CD8-positive, alpha-beta memory T cell (primary cell): ENCODE measurements at regions of chr1 and their contacts with region 1.

Region 1: DNA sequence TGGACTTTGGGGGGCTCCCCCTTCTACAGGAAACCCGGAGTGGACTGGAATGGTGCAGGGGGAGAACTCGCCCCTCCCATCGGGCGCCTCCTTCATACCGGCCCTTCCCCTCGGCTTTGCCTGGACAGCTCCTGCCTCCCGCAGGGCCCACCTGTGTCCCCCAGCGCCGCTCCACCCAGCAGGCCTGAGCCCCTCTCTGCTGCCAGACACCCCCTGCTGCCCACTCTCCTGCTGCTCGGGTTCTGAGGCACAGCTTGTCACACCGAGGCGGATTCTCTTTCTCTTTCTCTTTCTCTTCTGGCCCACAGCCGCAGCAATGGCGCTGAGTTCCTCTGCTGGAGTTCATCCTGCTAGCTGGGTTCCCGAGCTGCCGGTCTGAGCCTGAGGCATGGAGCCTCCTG is at the start of gene TNFRSF14:
- DNase-seq: peak; percentile 65 to 87 (median 79)
- H3K4me3 ChIP-seq: peak within 1 kb of the TSS; percentile 98
- H3K4me3 Mint-ChIP-seq: peak within 1 kb of the TSS; percentile 94 to 99 (median 99)
- H3K27ac ChIP-seq: peak within 1 kb of the TSS; percentile 95
- H3K27ac Mint-ChIP-seq: peak within 1 kb of the TSS; percentile 93 to 99 (median 98)
- H3K4me1 ChIP-seq: peaks cover 35% of the 10 kb centered on the region
- H3K4me1 Mint-ChIP-seq: peaks cover 28 to 58% (median 30%) of the 10 kb centered on the region in 3 donors
- H3K27me3 ChIP-seq: no peaks in the 10 kb centered on the region
- H3K27me3 Mint-ChIP-seq: peaks cover 0 to under 1% of the 10 kb centered on the region in 2 donors
- total RNA-seq, gene TNFRSF14: 164 to 168 TPM

Region 2: DNA sequence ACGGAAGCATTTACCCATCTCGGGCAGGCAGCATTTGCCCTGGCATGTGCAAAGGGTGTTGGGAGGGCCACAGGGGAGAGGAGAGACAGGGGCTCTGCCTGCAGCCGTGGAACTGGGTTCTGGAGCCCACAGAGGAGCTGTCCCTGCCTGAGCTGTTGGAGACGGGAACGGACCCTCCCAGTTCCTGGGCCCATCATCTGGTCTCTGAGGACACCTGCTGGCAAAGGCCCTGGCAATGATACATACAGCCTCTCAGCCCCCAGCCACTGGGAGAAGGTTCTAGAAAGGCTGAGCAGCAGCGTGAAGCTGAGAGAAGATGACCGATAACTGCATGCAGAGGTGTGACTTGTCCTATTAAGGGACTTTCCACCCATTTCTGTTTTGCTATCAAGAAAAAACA is 393.1 kb before region 1 on chr1:
- CTCF ChIA-PET with region 1: no interaction called
- POLR2A ChIA-PET with region 1: no interaction called
- DNase-seq: peak in 1 of 5 donors; percentile 33
- H3K4me3 ChIP-seq: no peak overlapping the region
- H3K4me3 Mint-ChIP-seq: peak overlapping the region in 1 of 7 donors; percentile 44
- H3K27ac ChIP-seq: no peak overlapping the region
- H3K27ac Mint-ChIP-seq: peak overlapping the region in 2 of 8 donors; percentile 24 to 73
- H3K4me1 ChIP-seq: no peaks in the 10 kb centered on the region
- H3K4me1 Mint-ChIP-seq: peaks cover 10 to 15% (median 13%) of the 10 kb centered on the region in 3 donors
- H3K27me3 ChIP-seq: no peaks in the 10 kb centered on the region
- H3K27me3 Mint-ChIP-seq: no peaks in the 10 kb centered on the region

Region 3: DNA sequence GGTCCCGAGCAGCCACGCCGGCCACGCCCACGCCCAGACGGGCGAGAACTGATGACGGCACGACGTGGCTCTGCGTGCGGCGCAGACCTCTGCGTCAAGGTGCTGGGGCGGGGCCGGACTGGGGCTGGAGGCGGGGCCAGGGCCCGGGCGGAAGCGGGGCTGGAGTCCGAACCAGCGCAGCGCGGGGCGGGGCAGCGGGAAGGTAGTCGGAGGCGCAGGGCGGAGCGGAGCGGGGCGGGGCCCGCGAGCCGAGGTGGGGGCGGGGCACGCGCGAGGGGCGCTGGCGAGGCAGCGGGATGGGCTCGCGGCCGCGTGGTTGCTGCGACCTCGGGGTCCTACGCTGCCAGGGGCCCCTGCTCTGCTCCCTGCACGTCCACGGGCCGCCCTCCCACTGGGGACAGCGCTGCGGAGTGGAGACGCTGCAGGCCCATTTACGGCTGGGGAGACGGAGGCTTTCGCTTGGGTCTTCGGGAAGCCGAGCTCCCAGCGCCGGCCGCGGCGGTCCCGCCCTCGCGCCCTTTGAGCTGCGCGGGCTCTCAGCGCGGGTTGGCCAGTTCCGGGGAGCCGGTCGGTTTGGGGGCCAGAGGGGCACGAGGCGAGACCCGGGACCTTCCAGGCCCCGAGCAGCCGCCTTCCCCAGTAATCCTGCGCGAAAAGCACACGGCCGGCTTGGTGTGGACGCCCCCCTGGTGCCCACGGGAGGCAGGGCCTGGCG is 143.6 kb before region 1 on chr1 and contains the start of gene PEX10:
- CTCF ChIA-PET with region 1: interaction called, 20 read pairs
- POLR2A ChIA-PET with region 1: interaction called, 5 read pairs
- DNase-seq: peak; percentile 98 to 99 (median 98)
- H3K4me3 ChIP-seq: peak within 1 kb of the TSS; percentile 78
- H3K4me3 Mint-ChIP-seq: peak within 1 kb of the TSS; percentile 79 to 94 (median 87)
- H3K27ac ChIP-seq: peak within 1 kb of the TSS; percentile 90
- H3K27ac Mint-ChIP-seq: peak within 1 kb of the TSS; percentile 81 to 97 (median 88)
- H3K4me1 ChIP-seq: peaks cover 52% of the 10 kb centered on the region
- H3K4me1 Mint-ChIP-seq: peaks cover 30 to 51% (median 30%) of the 10 kb centered on the region in 3 donors
- H3K27me3 ChIP-seq: no peaks in the 10 kb centered on the region
- H3K27me3 Mint-ChIP-seq: no peaks in the 10 kb centered on the region
- total RNA-seq, gene PEX10: 25.6 to 26.2 TPM

Region 4: GRCh38 chr1:2525920-2526823 is 30.1 kb before region 1 on chr1 and contains the start of gene PANK4:
- CTCF ChIA-PET with region 1: interaction called, 9 read pairs
- POLR2A ChIA-PET with region 1: interaction called, 15 read pairs
- DNase-seq: peak; percentile 79 to 90 (median 85)
- H3K4me3 ChIP-seq: peak within 1 kb of the TSS; percentile 93
- H3K4me3 Mint-ChIP-seq: peak within 1 kb of the TSS; percentile 88 to 99 (median 90)
- H3K27ac ChIP-seq: peak within 1 kb of the TSS; percentile 62
- H3K27ac Mint-ChIP-seq: peak within 1 kb of the TSS; percentile 86 to 98 (median 97)
- H3K4me1 ChIP-seq: peaks cover 57% of the 10 kb centered on the region
- H3K4me1 Mint-ChIP-seq: peaks cover 40 to 69% (median 44%) of the 10 kb centered on the region in 3 donors
- H3K27me3 ChIP-seq: peaks cover 7% of the 10 kb centered on the region
- H3K27me3 Mint-ChIP-seq: peaks cover 9 to 11% of the 10 kb centered on the region in 2 donors
- total RNA-seq, gene PANK4: 40.3 to 46.3 TPM

Region 5: GRCh38 chr1:2545759-2546514 is 10.3 kb before region 1 on chr1:
- CTCF ChIA-PET with region 1: interaction called, 19 read pairs
- POLR2A ChIA-PET with region 1: interaction called, 12 read pairs
- DNase-seq: peak; percentile 86 to 92 (median 88)
- H3K4me3 ChIP-seq: peak overlapping the region; percentile 96
- H3K4me3 Mint-ChIP-seq: peak overlapping the region; percentile 91 to 98 (median 94)
- H3K27ac ChIP-seq: peak overlapping the region; percentile 92
- H3K27ac Mint-ChIP-seq: peak overlapping the region; percentile 50 to 100 (median 96)
- H3K4me1 ChIP-seq: peaks cover 52% of the 10 kb centered on the region
- H3K4me1 Mint-ChIP-seq: peaks cover 13 to 53% (median 19%) of the 10 kb centered on the region in 3 donors
- H3K27me3 ChIP-seq: no peaks in the 10 kb centered on the region
- H3K27me3 Mint-ChIP-seq: no peaks in the 10 kb centered on the region

Region 6: GRCh38 chr1:2575801-2576663 is 19.8 kb after region 1 on chr1:
- CTCF ChIA-PET with region 1: interaction called, 30 read pairs
- POLR2A ChIA-PET with region 1: interaction called, 12 read pairs
- DNase-seq: peak in 1 of 5 donors; percentile 43
- H3K4me3 ChIP-seq: no peak overlapping the region
- H3K4me3 Mint-ChIP-seq: peak overlapping the region in 2 of 7 donors; percentile 45 to 56
- H3K27ac ChIP-seq: no peak overlapping the region
- H3K27ac Mint-ChIP-seq: peak overlapping the region in 7 of 8 donors; percentile 50 to 84 (median 70)
- H3K4me1 ChIP-seq: peaks cover 39% of the 10 kb centered on the region
- H3K4me1 Mint-ChIP-seq: peaks cover 25 to 37% (median 29%) of the 10 kb centered on the region in 3 donors
- H3K27me3 ChIP-seq: no peaks in the 10 kb centered on the region
- H3K27me3 Mint-ChIP-seq: peaks cover 0 to 4% of the 10 kb centered on the region in 2 donors

Region 7: DNA sequence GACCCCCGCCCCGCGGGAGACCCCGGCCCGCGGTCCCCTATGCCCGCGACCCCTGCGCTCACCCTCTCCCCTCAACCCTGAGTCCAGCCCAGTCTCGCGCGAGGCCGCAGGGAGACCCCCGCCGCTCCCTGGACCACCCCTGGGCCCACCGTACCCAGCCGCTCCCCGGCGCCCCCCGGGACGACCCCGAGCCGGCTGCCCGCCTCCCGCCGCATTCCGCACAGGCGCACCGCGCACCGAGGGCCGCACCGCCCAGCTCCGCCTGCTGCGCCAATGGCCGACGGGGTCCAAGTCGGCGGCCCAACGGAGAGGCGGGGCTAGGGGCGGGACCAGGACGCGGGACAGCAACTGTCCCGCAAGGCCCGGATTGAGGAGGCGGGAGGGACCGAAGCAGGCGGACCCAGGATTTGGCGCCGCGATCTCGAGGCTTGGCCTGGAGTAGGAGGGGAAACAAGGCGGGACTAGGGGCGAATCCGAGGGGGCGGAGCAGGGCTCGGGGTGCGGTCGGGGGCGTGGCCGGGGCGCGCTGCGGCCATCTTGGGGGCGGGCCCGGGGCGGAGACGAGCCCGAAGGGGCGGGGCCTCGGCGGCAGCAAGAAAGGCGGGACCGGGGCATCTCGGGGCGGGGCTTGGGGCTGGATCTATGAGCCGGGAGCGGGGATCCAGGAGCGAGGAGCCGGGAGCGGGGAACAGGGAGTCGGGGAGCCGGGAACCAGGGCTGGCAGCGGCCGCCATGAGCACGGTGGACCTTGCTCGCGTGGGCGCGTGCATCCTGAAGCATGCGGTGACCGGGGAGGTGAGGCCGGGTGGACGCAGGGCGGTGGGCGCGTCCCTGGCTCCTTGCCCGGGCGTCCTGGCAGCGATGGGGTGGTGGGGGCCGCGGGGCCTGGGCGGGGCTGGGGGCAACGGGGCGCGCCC is 30.1 kb after region 1 on chr1 and contains the start of gene PRXL2B:
- CTCF ChIA-PET with region 1: interaction called, 34 read pairs
- POLR2A ChIA-PET with region 1: interaction called, 41 read pairs
- DNase-seq: peak; percentile 93 to 98 (median 95)
- H3K4me3 ChIP-seq: peak within 1 kb of the TSS; percentile 94
- H3K4me3 Mint-ChIP-seq: peak within 1 kb of the TSS; percentile 89 to 99 (median 93)
- H3K27ac ChIP-seq: peak within 1 kb of the TSS; percentile 95
- H3K27ac Mint-ChIP-seq: peak within 1 kb of the TSS; percentile 86 to 98 (median 98)
- H3K4me1 ChIP-seq: peaks cover 37% of the 10 kb centered on the region
- H3K4me1 Mint-ChIP-seq: peaks cover 26 to 52% (median 30%) of the 10 kb centered on the region in 3 donors
- H3K27me3 ChIP-seq: no peaks in the 10 kb centered on the region
- H3K27me3 Mint-ChIP-seq: no peaks in the 10 kb centered on the region
- total RNA-seq, gene PRXL2B: 41.3 to 45.5 TPM